ENCODE measurements at regions of chr12 and their contacts with region 1.

Region 1: DNA sequence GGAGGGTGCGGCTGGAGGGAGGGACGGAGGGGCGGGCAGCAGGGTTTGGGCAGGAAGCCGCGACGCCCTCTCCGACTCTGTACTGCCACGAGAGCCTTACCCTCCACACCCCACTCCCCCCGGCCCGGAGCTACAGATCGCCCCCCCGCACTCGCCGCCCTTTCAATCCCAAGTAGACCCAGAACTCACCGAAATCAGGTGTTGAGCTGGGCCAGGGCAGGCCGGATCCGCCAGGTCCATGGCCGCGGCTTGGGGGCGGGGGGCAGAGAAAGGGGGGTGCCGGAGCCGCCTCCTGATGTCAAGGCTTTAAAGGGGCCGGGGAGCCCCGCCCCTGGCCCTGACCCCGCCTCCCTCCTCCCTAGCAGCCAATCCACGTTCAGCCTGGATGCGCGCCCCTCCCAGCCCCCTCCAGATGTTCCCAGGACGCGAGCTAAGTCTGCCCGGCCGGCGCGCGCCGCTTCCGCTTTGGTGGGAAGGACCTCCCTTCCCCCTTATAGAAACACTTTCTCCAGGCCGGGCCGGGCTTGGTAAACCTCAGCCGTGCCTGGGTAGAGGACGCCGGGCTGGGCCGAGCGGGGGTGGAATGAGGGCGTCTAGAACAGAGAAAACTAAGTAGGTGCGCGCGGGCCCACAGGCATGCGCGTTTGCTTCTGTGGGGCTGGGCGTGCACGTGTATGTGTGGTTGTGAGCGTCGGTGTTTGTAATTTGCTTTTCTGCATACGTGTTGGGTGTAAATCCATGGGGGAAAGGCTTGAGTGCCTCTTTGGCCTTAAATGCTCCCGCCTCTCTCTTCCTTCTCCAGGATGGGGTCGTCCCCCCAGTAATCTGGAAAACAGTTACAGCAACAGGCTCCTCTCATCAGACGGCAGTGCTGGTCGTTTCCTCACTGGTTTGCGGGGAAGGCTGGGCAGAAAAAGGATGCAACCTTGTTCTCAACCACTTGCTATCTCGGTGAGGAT is at the start of gene NCKAP5L:
- DNase-seq: peak; percentile 96
- ATAC-seq: peak; percentile 87
- H3K4me3 ChIP-seq: peak within 1 kb of the TSS; percentile 72
- H3K27ac ChIP-seq: peak within 1 kb of the TSS; percentile 92
- H3K4me1 ChIP-seq: peaks cover 31% of the 10 kb centered on the region
- H3K27me3 ChIP-seq: no peaks in the 10 kb centered on the region
- CTCF ChIP-seq: no peak
- POLR2A ChIP-seq: peak; percentile 95
- RAD21 ChIP-seq: no peak
- total RNA-seq, gene NCKAP5L: 6.1 and 7.2 TPM in 2 replicates

Region 2: DNA sequence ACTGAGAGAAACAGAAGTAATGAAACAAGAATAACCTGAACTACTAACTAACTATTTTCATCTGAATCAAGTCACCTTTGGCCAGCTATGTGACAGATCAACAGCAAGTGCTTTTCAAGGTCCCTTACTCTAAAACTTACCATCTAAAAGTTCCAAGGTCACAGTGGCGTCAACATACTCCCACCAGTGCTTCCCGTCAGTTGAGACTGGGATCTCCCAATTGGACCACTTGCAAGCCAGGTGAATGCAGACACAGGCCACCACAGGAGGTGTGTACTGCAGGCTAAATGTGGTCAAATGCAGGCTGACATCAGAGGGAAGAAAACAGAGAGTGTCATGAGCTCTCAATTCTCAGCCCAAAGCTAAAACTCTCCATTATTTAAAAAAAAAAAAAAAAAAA is 1132.6 kb before region 1 on chr12:
- CTCF ChIA-PET with region 1: no interaction called
- POLR2A ChIA-PET with region 1: interaction called, 14 read pairs
- dilution Hi-C with region 1: no loop called
- in situ Hi-C with region 1: no loop called
- intact Hi-C with region 1: no loop called
- DNase-seq: no peak
- ATAC-seq: no peak
- H3K4me3 ChIP-seq: no peak overlapping the region
- H3K27ac ChIP-seq: no peak overlapping the region
- H3K4me1 ChIP-seq: 0 out of 2 replicates have a peak, but pooled peaks cover 2% of the 10 kb centered on the region
- H3K27me3 ChIP-seq: no peaks in the 10 kb centered on the region
- CTCF ChIP-seq: no peak
- POLR2A ChIP-seq: no peak
- RAD21 ChIP-seq: no peak

Region 3: GRCh38 chr12:49763006-49763591 is 65.3 kb before region 1 on chr12:
- CTCF ChIA-PET with region 1: no interaction called
- POLR2A ChIA-PET with region 1: interaction called, 13 read pairs
- dilution Hi-C with region 1: no loop called
- in situ Hi-C with region 1: no loop called
- intact Hi-C with region 1: no loop called
- DNase-seq: peak; percentile 39
- ATAC-seq: peak; percentile 81
- H3K4me3 ChIP-seq: no peak overlapping the region
- H3K27ac ChIP-seq: no peak overlapping the region
- H3K4me1 ChIP-seq: no peaks in the 10 kb centered on the region
- H3K27me3 ChIP-seq: no peaks in the 10 kb centered on the region
- CTCF ChIP-seq: peak; percentile 62
- POLR2A ChIP-seq: no peak
- RAD21 ChIP-seq: peak; percentile 28; the same call in 1 of the 2 replicates

Region 4: GRCh38 chr12:49866859-49867579 is 38.6 kb after region 1 on chr12:
- CTCF ChIA-PET with region 1: no interaction called
- POLR2A ChIA-PET with region 1: no interaction called
- dilution Hi-C with region 1: no loop called
- in situ Hi-C with region 1: no loop called
- intact Hi-C with region 1: no loop called
- DNase-seq: peak; percentile 46
- ATAC-seq: peak; percentile 25; the same call in 1 of the 2 replicates
- H3K4me3 ChIP-seq: no peak overlapping the region
- H3K27ac ChIP-seq: no peak overlapping the region
- H3K4me1 ChIP-seq: peaks cover 23% of the 10 kb centered on the region
- H3K27me3 ChIP-seq: peaks cover 22% of the 10 kb centered on the region
- CTCF ChIP-seq: peak; percentile 83
- POLR2A ChIP-seq: no peak
- RAD21 ChIP-seq: peak; percentile 86